Posterior cingulate gyrus (tissue), 11 donors: ENCODE measurements at regions of chr6 and their contacts with region 1.

Region 1: DNA sequence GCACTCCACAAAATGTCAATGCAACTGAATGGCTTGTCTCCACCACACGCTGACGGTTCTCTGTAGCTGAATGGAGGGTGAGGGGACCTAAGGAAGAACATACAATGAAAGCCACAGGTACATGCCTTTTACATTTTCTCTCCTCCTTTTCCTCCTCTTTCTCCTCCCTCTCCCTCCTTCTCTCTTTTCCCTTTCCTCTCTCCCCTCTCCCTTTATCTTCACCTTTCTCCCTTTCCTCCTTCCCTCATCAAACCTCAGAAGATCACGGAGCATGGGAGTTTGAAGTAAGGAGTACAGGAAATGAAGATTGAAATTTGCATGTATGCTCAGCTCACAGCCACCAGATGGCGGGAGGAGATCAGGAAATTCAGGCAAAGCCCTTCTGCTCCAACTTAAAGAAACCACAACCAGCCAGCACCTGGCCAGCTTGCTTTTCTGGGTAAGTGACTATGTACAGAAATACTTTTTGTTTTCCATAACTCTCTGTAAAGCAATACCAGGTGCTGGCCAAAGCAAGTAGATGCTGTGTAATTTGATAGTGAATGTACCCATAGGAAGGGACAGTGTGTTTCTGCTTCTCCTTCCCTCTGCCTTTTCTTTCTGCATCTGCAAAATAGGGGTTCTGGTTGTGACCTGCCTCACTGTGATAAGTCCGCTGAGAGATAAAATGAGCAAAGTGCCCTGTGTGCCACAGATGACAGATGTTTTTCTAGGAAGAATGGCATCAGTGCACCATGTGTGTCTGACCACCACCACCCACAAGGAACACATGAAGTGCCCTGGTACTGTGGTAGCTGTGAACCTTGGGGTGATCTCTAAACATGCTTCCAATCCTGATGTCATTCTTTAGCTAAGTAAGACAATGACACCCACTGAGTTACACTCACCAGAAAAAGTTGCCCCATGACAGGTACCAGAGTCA is 18.6 kb upstream of the FOXO3 start:
- DNase-seq: peak; percentile 38 to 95 (median 68)

Region 2: DNA sequence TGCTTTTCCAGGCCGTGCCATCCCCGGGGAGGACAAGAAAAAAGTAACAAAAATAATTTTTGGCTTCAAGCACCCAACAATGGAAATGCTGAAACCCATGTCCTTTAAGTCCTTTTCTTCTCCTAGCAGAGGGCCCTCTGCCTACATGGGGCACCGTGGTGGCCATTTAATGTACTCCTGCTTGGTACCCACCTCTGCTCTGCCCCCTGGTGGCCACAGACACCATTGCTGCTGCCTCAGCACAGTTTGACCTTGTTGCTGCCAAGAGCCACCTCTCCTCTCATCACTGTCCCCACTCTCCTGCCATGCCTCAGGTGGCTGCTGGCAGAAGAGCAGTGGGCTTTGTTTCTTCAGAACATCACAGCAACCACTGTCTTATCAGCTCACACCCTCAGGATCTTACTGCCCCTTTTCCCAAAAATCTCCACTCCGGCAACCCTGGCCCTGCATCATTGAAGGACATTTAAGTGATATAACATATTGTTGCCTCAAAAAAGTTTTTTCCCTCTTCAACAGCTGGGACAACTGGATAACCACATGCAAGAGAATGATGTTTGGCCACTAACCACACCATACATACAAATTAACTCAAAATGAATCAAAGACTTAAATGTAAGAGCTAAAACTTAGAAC is 293.2 kb after region 1 on chr6:
- intact Hi-C with region 1: loop called (anchors 1 kb)
- DNase-seq: peak; percentile 73 to 98 (median 90)

Region 3: DNA sequence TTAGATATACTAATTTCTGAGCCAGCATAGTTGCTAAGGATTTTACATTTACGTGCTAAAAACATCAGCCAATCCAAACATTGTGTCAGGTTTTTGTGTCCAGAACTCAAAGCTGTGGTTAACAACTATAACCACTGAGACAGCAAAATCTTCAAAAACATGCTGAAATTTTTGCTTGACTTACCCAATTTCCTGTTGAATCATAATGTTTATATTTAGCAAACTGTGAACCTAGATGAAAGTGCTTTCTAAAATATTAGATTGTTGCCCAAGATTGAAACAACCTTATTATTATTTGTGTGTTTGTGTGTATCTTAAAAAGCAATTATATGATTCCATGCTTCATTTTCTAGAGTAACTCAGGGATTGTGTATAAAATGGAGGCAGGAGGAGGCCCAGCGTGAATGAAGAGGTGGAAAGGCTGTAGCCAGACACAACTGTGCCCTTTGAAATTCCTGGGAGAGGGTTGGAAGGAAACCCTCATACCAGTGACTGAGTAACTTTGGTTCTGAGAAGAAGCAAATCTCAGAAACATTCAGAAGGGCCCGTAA is 354.1 kb after region 1 on chr6:
- intact Hi-C with region 1: loop called (anchors 1 kb)
- DNase-seq: no peak

Region 4: DNA sequence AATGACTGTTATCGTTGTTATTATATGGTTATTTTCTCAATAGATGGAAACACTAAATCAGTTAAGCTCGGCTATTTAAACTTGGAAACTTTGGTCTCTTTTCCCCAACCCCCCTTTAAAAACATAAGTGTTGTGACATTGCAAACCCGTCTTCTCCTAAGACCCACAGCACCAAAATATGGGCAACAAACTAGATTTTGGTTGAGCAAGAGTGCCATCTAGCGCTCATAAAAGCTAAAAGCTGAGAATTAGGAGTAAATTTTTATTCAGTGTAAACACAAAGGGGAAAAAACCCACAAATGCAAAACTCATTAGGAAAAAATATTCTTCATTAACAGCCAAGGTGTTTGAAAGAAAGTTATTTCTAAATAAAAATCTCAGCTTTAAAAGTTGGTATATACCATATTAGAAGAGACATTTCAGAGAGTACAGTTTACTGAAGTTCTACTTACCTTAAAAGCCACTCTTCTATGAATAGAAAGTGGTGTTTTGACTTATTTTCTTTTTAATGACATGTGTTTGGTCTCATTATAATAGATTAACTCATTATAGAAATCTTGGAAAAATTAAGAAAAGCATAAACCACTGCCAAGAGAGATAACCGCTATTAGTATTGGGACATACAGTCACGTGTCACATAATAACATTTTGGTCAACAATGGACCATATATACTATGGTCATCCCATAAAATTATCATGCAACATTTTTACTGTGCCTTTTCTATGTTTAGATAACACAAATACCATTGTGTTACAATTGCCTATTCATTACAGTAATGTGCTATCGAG is 531.4 kb after region 1 on chr6:
- intact Hi-C with region 1: loop called (anchors 1 kb)
- DNase-seq: peak in 2 of 10 donors; percentile 17 to 23